CD8-positive, alpha-beta T cell (primary cell): ENCODE measurements at regions of chr6 and their contacts with region 1.

Region 1: GRCh38 chr6:110815217-110816109 is at the start of gene CDK19:
- DNase-seq: peak; percentile 96 to 99 (median 98)
- ATAC-seq: peak; percentile 81
- H3K4me3 ChIP-seq: peak within 1 kb of the TSS; percentile 83 to 89
- H3K4me3 Mint-ChIP-seq: peak within 1 kb of the TSS; percentile 98
- H3K27ac ChIP-seq: peak within 1 kb of the TSS; percentile 88 to 95
- H3K27ac Mint-ChIP-seq: peak within 1 kb of the TSS; percentile 99
- H3K4me1 ChIP-seq: peaks cover 12% of the 10 kb centered on the region
- H3K4me1 Mint-ChIP-seq: peaks cover 23% of the 10 kb centered on the region
- H3K27me3 ChIP-seq: no peaks in the 10 kb centered on the region
- H3K27me3 Mint-ChIP-seq: no peaks in the 10 kb centered on the region
- CTCF ChIP-seq: no peak
- total RNA-seq, gene CDK19: 4.9 to 5.0 TPM

Region 2: GRCh38 chr6:109440331-109441068 is 1375.0 kb before region 1 on chr6 and contains the starts of genes PPIL6 and SMPD2:
- CTCF ChIA-PET with region 1: no interaction called
- POLR2A ChIA-PET with region 1: no interaction called
- intact Hi-C with region 1: loop called in 1 of 2 experiments (anchors 2 kb)
- DNase-seq: peak; percentile 61 to 92 (median 75)
- ATAC-seq: peak; percentile 79
- H3K4me3 ChIP-seq: peak within 1 kb of the TSS; percentile 68 to 92
- H3K4me3 Mint-ChIP-seq: peak within 1 kb of the TSS; percentile 89
- H3K27ac ChIP-seq: peak within 1 kb of the TSS; percentile 69 to 83
- H3K27ac Mint-ChIP-seq: peak within 1 kb of the TSS; percentile 93
- H3K4me1 ChIP-seq: peaks cover 26% of the 10 kb centered on the region
- H3K4me1 Mint-ChIP-seq: peaks cover 35% of the 10 kb centered on the region
- H3K27me3 ChIP-seq: no peaks in the 10 kb centered on the region
- H3K27me3 Mint-ChIP-seq: no peaks in the 10 kb centered on the region
- CTCF ChIP-seq: peak; percentile 31
- total RNA-seq, gene PPIL6: 1.3 to 1.4 TPM
- total RNA-seq, gene SMPD2: 22.8 to 23.9 TPM

Region 3: GRCh38 chr6:109690737-109691621 is 1124.5 kb before region 1 on chr6 and contains the starts of genes AK9 and FIG4:
- CTCF ChIA-PET with region 1: no interaction called
- POLR2A ChIA-PET with region 1: no interaction called
- intact Hi-C with region 1: loop called in 1 of 2 experiments (anchors 5 kb)
- DNase-seq: peak; percentile 68 to 93 (median 90)
- ATAC-seq: peak; percentile 96
- H3K4me3 ChIP-seq: peak within 1 kb of the TSS; percentile 85 to 91
- H3K4me3 Mint-ChIP-seq: peak within 1 kb of the TSS; percentile 93
- H3K27ac ChIP-seq: peak within 1 kb of the TSS; percentile 81 to 91
- H3K27ac Mint-ChIP-seq: peak within 1 kb of the TSS; percentile 98
- H3K4me1 ChIP-seq: peaks cover 22% of the 10 kb centered on the region
- H3K4me1 Mint-ChIP-seq: peaks cover 27% of the 10 kb centered on the region
- H3K27me3 ChIP-seq: no peaks in the 10 kb centered on the region
- H3K27me3 Mint-ChIP-seq: no peaks in the 10 kb centered on the region
- CTCF ChIP-seq: no peak
- total RNA-seq, gene AK9: 5.1 to 6.5 TPM
- total RNA-seq, gene FIG4: 2.3 TPM

Region 4: GRCh38 chr6:110682460-110682853 is 133.0 kb before region 1 on chr6:
- CTCF ChIA-PET with region 1: interaction called, 3 read pairs
- POLR2A ChIA-PET with region 1: interaction called, 8 read pairs
- intact Hi-C with region 1: loop called (anchors 2 to 5 kb)
- DNase-seq: peak; percentile 18 to 89 (median 63)
- ATAC-seq: peak; percentile 99
- H3K4me3 ChIP-seq: no peak overlapping the region
- H3K4me3 Mint-ChIP-seq: no peak overlapping the region
- H3K27ac ChIP-seq: no peak overlapping the region
- H3K27ac Mint-ChIP-seq: peak overlapping the region; percentile 20
- H3K4me1 ChIP-seq: peaks cover 8% of the 10 kb centered on the region
- H3K4me1 Mint-ChIP-seq: peaks cover 16% of the 10 kb centered on the region
- H3K27me3 ChIP-seq: no peaks in the 10 kb centered on the region
- H3K27me3 Mint-ChIP-seq: no peaks in the 10 kb centered on the region
- CTCF ChIP-seq: peak; percentile 67

Region 5: DNA sequence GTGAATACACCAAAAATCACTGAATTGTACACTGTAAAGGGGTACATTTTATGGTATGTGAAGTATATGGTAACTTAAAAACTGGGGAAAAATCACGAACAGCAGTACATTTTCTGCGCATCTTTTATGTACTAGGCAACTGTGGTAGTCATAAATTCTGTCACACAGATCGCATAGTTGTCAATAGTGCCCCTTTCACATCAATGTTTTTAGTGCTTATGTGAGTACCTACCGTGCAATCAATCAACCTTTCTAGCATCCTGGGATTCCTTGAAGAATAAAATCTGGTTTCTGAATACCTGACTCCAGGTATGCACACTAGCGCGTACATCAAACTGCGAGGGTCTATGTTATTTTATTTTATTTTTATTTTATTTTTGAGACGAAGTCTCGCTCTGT is 165.7 kb after region 1 on chr6:
- CTCF ChIA-PET with region 1: no interaction called
- POLR2A ChIA-PET with region 1: interaction called, 15 read pairs
- intact Hi-C with region 1: loop called (anchors 1 kb)
- DNase-seq: peak in 1 of 9 experiments; percentile 49
- ATAC-seq: peak; percentile 1
- H3K4me3 ChIP-seq: peak overlapping the region; percentile 85 to 95
- H3K4me3 Mint-ChIP-seq: peak overlapping the region; percentile 99
- H3K27ac ChIP-seq: peak overlapping the region; percentile 90 to 97
- H3K27ac Mint-ChIP-seq: peak overlapping the region; percentile 100
- H3K4me1 ChIP-seq: peaks cover 6% of the 10 kb centered on the region
- H3K4me1 Mint-ChIP-seq: peaks cover 45% of the 10 kb centered on the region
- H3K27me3 ChIP-seq: no peaks in the 10 kb centered on the region
- H3K27me3 Mint-ChIP-seq: no peaks in the 10 kb centered on the region
- CTCF ChIP-seq: no peak

Region 6: DNA sequence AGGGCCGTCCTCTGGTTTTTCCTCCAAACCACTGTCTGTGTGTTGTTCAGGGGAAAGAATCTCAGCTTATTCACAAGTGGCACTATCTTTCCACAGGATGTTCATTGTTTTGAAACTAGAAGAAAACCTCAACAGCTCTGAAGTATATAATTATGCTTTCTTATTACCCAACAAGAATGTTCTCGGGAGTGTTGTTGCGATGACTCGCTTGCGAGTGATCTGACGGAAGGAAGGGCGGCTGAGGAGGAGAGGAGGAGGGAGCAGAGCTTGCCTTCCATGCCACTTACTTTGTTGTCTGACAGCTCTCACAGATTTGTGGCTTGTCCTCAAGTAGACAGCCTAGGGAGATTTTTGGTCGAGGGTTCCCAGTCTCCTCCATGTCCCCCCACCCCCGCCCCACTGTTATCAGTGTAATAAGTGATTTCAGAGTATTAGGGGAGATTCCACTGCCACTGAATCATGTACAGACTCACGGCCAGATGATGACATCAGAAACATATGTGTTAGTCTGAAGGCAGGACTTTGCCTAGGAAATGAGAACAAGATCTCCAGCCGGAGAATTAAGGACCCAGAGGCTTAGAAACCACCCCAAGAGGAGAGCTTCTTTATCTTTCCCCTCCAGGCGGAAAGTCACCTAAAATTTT is 1157.8 kb after region 1 on chr6:
- CTCF ChIA-PET with region 1: no interaction called
- POLR2A ChIA-PET with region 1: no interaction called
- intact Hi-C with region 1: loop called in 1 of 2 experiments (anchors 5 kb)
- DNase-seq: peak; percentile 22 to 86 (median 69)
- ATAC-seq: peak; percentile 92
- H3K4me3 ChIP-seq: no peak overlapping the region
- H3K4me3 Mint-ChIP-seq: peak overlapping the region; percentile 56
- H3K27ac ChIP-seq: peak overlapping the region; percentile 71 to 78
- H3K27ac Mint-ChIP-seq: peak overlapping the region; percentile 97
- H3K4me1 ChIP-seq: peaks cover 70% of the 10 kb centered on the region
- H3K4me1 Mint-ChIP-seq: peaks cover 69% of the 10 kb centered on the region
- H3K27me3 ChIP-seq: no peaks in the 10 kb centered on the region
- H3K27me3 Mint-ChIP-seq: no peaks in the 10 kb centered on the region
- CTCF ChIP-seq: no peak